ENCODE measurements at regions of chrX and their contacts with region 1.

Region 1: GRCh38 chrX:81121513-81122382 is 80.0 kb downstream of the HMGN5 start:
- DNase-seq: peak; percentile 88 to 89
- H3K4me3 ChIP-seq: peak overlapping the region; percentile 49
- H3K4me3 Mint-ChIP-seq: peak overlapping the region; percentile 85
- H3K27ac Mint-ChIP-seq: no peak overlapping the region
- H3K4me1 ChIP-seq: no peaks in the 10 kb centered on the region
- H3K4me1 Mint-ChIP-seq: no peaks in the 10 kb centered on the region
- H3K27me3 ChIP-seq: no peaks in the 10 kb centered on the region
- H3K27me3 Mint-ChIP-seq: peaks cover 4% of the 10 kb centered on the region
- CTCF ChIP-seq: no peak

Region 2: DNA sequence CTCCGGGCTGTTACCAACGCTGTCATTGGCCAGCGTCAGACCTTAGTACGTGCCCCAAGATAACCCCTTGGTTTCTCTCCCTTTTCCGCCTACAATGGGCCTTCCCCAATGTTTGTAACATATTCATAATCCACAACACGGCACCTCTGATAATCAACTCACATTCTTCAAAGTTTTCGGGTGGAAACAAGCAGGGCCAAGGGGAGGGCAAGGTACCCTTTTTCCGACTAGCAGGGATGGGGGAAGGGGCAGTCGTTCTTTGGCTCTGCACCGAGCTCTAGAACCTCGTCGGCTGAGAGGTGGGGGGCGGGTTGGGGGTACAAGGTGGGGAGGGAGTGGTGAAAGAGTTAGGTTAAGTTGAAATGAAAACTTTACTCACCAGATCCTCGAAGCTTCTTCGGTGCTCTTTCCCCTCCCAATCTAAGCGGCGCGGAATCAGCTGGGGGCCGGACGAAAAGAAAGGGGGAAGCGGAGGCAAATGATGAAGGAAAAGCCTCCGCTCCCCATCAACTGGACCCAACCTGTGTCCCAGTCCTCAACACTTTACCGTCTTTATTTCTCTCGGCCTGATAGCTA is 313.5 kb before region 1 on chrX:
- CTCF ChIA-PET with region 1: no interaction called
- POLR2A ChIA-PET with region 1: no interaction called
- intact Hi-C with region 1: loop called (anchors 5 kb)
- DNase-seq: peak; percentile 59 to 71
- H3K4me3 ChIP-seq: peak overlapping the region; percentile 80
- H3K4me3 Mint-ChIP-seq: peak overlapping the region; percentile 96
- H3K27ac Mint-ChIP-seq: no peak overlapping the region
- H3K4me1 ChIP-seq: no peaks in the 10 kb centered on the region
- H3K4me1 Mint-ChIP-seq: no peaks in the 10 kb centered on the region
- H3K27me3 ChIP-seq: no peaks in the 10 kb centered on the region
- H3K27me3 Mint-ChIP-seq: no peaks in the 10 kb centered on the region
- CTCF ChIP-seq: no peak

Region 3: DNA sequence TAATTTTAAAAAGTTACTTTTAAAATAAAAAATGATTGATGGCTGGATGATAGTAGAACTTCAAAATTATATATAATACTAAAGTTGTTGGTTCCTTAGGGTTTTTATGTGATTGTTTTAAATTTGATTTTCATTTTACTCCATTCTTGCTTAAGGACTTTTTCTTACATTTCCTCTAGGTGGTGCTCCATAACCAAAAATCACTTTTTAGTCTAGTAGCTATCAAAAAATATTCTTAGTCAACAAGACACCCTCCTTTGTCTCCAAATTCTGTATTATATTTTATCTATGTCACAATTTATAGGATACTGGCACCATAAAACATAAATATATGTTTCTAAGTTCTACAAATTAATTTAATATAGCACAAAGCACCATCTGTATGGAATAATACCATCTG is 244.9 kb before region 1 on chrX:
- CTCF ChIA-PET with region 1: no interaction called
- POLR2A ChIA-PET with region 1: no interaction called
- intact Hi-C with region 1: loop called (anchors 2 kb)
- DNase-seq: peak in 1 of 2 experiments; percentile 6
- H3K4me3 ChIP-seq: no peak overlapping the region
- H3K4me3 Mint-ChIP-seq: no peak overlapping the region
- H3K27ac Mint-ChIP-seq: no peak overlapping the region
- H3K4me1 ChIP-seq: no peaks in the 10 kb centered on the region
- H3K4me1 Mint-ChIP-seq: no peaks in the 10 kb centered on the region
- H3K27me3 ChIP-seq: no peaks in the 10 kb centered on the region
- H3K27me3 Mint-ChIP-seq: peaks cover 5% of the 10 kb centered on the region
- CTCF ChIP-seq: peak in 1 of 2 experiments; percentile 19

Region 4: GRCh38 chrX:81201671-81202455 is 80.1 kb after region 1 on chrX and contains the starts of genes HMGN5 and SH3BGRL:
- CTCF ChIA-PET with region 1: no interaction called
- POLR2A ChIA-PET with region 1: no interaction called
- intact Hi-C with region 1: no loop called
- DNase-seq: peak; percentile 73 to 78
- H3K4me3 ChIP-seq: peak within 1 kb of the TSS; percentile 48
- H3K4me3 Mint-ChIP-seq: peak within 1 kb of the TSS; percentile 77
- H3K27ac Mint-ChIP-seq: peak within 1 kb of the TSS; percentile 90
- H3K4me1 ChIP-seq: no peaks in the 10 kb centered on the region
- H3K4me1 Mint-ChIP-seq: no peaks in the 10 kb centered on the region
- H3K27me3 ChIP-seq: no peaks in the 10 kb centered on the region
- H3K27me3 Mint-ChIP-seq: no peaks in the 10 kb centered on the region
- CTCF ChIP-seq: no peak
- total RNA-seq, gene HMGN5: 1.1 and 1.9 TPM in 2 replicates
- total RNA-seq, gene SH3BGRL: 24.6 and 32.1 TPM in 2 replicates

Region 5: DNA sequence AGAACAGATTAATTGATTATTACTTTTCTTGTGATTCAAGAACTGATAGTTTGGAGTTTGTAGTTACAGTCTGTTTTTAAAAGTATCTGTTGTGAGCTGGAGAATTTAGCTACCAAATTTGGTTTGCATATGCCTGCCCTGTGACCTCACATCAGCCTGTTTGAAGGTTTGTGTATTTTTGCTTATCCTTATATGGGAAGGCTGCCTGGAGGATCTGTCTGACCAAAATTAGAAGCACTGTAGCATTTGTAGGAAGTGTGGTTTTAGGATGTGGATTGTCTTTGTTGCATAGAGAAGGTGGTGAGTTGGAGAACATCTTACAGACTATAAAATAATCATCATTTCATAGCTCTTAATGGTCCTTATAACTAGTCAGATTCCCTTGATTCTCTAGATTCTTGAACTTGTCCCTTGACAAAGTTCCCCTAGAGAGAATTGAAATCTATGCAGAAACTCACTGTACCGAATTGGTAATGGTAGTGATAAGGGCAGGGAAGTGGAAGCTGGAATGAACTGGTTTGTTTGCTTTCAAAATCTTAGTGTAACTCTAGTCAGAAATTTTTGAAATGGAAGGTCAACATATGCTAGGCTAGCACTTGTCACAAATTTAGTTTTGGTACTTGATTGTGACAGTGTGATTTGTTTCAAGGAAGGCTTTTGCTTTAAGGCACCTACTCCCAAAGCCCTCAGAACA is 137.4 kb after region 1 on chrX:
- CTCF ChIA-PET with region 1: no interaction called
- POLR2A ChIA-PET with region 1: no interaction called
- intact Hi-C with region 1: no loop called
- DNase-seq: no peak
- H3K4me3 ChIP-seq: no peak overlapping the region
- H3K4me3 Mint-ChIP-seq: no peak overlapping the region
- H3K27ac Mint-ChIP-seq: no peak overlapping the region
- H3K4me1 ChIP-seq: no peaks in the 10 kb centered on the region
- H3K4me1 Mint-ChIP-seq: no peaks in the 10 kb centered on the region
- H3K27me3 ChIP-seq: no peaks in the 10 kb centered on the region
- H3K27me3 Mint-ChIP-seq: no peaks in the 10 kb centered on the region
- CTCF ChIP-seq: no peak